ENCODE measurements at regions of chrX and their contacts with region 1.

Region 1: GRCh38 chrX:48957827-48958634 is 624 bp upstream of the OTUD5 start:
- DNase-seq: peak; percentile 81
- ATAC-seq: peak; percentile 84
- H3K4me3 Mint-ChIP-seq: peak overlapping the region; percentile 98
- H3K27ac Mint-ChIP-seq: peak overlapping the region; percentile 100
- H3K4me1 Mint-ChIP-seq: peaks cover 69% of the 10 kb centered on the region
- H3K27me3 Mint-ChIP-seq: no peaks in the 10 kb centered on the region
- CTCF ChIP-seq: no peak

Region 2: GRCh38 chrX:48196745-48197201 is 761.3 kb before region 1 on chrX and contains the start of gene SSX5:
- CTCF ChIA-PET with region 1: no interaction called
- POLR2A ChIA-PET with region 1: no interaction called
- intact Hi-C with region 1: no loop called
- DNase-seq: no peak
- ATAC-seq: no peak
- H3K4me3 Mint-ChIP-seq: no peak within 1 kb of the TSS
- H3K27ac Mint-ChIP-seq: no peak within 1 kb of the TSS
- H3K4me1 Mint-ChIP-seq: no peaks in the 10 kb centered on the region
- H3K27me3 Mint-ChIP-seq: no peaks in the 10 kb centered on the region
- CTCF ChIP-seq: no peak
- total RNA-seq, gene SSX5: not detected in 2 replicates

Region 3: DNA sequence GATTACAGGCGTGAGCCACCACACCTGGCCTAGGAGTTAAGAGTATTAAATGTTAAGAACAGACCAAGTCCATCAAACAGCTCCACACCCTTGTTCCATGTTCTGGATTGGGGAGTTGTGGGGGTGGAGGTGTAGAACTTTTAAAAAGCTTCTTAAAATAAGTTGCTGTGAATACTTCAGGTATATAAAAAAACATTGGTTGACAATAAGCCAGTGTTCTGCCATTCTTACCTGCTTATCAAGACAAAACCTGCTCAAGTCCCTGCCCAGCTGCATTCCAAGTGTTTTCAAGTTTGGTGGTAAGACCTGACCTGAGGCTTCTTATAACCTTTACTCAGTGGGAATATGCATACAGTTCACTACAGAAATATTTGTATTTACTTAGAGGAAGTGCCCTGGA is 377.4 kb before region 1 on chrX:
- CTCF ChIA-PET with region 1: no interaction called
- POLR2A ChIA-PET with region 1: no interaction called
- intact Hi-C with region 1: no loop called
- DNase-seq: no peak
- ATAC-seq: no peak
- H3K4me3 Mint-ChIP-seq: no peak overlapping the region
- H3K27ac Mint-ChIP-seq: no peak overlapping the region
- H3K4me1 Mint-ChIP-seq: peaks cover 9% of the 10 kb centered on the region
- H3K27me3 Mint-ChIP-seq: no peaks in the 10 kb centered on the region
- CTCF ChIP-seq: no peak

Region 4: DNA sequence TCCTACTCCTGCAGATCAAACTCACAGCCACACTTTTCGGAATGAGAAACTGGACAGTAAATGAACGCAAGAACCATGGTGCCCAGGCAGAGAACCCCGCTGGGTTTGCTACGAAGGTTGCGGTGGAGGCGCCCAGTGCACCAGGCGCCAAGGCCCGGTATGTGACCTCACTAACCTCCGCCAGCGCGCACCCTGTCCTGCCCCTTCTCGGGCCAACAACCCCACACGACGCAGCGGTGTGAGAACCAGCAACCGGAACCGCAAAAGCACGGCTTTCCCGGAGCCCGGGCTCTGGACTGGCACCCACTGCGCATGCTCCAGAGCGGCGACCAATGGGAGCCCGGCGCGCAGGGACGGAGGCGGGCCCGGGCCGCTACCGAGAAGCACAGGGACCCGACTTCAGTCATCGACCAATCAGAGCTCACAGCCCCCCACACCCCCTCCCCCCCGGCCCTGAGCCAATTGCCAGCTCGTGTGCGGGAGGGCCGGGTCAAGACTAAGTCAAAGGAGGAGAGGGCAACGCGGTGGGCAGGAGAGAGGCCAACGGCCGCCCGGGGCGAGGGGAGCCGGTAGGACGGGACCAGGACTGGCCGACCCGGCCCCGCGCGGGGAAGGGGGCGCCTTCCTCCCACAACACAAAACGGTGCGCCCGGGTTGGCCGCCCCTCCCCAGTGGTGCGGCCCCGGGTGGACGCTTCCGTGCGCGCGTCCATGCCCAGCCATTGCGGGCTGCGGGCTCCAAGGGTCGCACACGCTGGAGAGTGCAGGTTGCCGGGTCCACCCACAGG is 281.7 kb before region 1 on chrX:
- CTCF ChIA-PET with region 1: no interaction called
- POLR2A ChIA-PET with region 1: interaction called, 5 read pairs
- intact Hi-C with region 1: loop called (anchors 5 kb)
- DNase-seq: peak; percentile 79
- ATAC-seq: peak; percentile 94
- H3K4me3 Mint-ChIP-seq: peak overlapping the region; percentile 89
- H3K27ac Mint-ChIP-seq: peak overlapping the region; percentile 88
- H3K4me1 Mint-ChIP-seq: peaks cover 22% of the 10 kb centered on the region
- H3K27me3 Mint-ChIP-seq: no peaks in the 10 kb centered on the region
- CTCF ChIP-seq: no peak

Region 5: DNA sequence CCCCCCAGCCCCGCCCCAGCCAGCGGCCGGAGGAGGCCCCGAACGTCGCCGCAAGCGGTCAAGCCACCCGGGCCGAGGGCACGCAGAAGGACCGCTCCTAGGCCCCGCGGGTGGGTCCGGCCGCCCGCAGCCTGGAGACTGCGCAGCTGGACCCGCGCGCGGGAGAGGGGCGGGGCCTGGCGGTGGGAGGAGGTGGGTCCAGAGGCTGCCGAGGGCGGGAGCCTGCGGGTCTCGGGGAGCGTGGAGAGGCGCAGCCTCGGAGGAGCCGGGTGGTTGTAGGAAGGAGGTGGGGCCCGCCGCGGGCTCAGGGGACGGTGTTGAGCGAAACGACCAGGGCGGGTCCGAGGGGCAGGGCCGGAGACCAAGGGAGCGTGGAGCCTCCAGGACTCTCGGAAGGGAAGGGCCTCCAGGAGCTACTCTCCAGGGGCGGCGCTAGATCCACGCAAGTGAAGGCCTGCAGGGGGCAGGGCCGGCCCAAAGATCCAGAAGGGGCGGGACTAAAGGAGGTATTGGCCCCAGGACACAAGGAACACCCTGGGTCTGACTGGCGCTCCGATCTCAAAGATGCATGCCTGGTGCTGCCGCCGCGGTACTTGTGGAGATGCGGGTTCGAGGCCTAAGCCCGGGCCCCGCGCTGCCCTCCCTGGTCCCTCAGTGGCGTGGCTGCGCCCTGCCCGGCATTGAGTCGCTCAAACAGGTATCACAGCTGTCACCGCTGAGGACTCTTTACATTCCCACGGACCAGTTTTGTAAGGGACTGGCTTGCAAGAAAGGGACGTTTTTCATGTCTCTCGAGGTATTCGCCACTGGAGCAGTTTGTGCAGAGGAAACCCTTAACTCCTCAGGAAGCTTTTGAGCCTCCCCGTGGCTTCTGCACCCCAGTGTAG is 66.4 kb before region 1 on chrX:
- CTCF ChIA-PET with region 1: no interaction called
- POLR2A ChIA-PET with region 1: interaction called, 13 read pairs
- intact Hi-C with region 1: loop called (anchors 1 kb)
- DNase-seq: peak; percentile 67
- ATAC-seq: peak; percentile 88
- H3K4me3 Mint-ChIP-seq: peak overlapping the region; percentile 82
- H3K27ac Mint-ChIP-seq: peak overlapping the region; percentile 65
- H3K4me1 Mint-ChIP-seq: peaks cover 23% of the 10 kb centered on the region
- H3K27me3 Mint-ChIP-seq: no peaks in the 10 kb centered on the region
- CTCF ChIP-seq: no peak

Region 6: DNA sequence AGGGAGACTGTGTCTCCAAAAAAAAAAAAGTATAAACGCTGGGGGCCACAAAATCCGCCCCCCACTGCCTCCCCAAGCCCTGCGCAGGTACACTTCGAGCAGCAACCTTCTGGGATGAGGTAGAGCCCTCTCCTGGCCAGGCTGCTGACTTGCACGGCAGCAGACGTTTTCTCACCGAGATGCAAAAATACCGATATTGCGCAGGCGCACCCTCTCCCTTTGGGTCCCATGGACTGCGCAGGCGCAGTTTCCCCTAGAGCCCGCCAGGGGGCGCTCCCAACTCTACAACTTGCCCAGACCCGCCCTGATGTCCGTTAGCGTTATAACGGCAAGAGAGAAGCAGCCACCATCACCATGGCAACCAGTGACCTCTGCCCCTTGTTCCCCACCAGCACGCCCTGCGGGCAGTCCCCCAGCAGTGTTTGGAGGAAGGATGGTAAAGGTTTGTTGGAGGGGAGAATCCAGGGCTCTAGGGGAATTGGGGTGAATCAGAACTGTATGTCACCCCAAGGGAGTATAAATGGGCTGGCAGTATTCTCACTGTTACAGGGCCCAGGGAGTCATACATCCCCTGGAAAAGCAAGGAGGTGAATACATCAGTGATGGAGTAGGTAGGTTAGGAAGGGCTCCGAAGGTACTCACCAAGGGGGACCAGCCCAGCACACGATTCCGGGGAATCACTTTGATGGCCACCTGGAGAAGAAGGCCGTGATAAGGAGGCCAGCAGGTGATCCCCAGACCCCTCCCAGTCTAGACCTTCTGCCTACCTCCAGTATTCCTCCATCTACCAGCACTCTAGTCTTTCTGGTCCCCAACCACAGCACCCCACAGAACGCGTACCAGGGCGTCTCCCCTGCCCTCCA is 40.7 kb before region 1 on chrX:
- CTCF ChIA-PET with region 1: no interaction called
- POLR2A ChIA-PET with region 1: interaction called, 31 read pairs
- intact Hi-C with region 1: loop called (anchors 1 kb)
- DNase-seq: peak; percentile 71
- ATAC-seq: peak; percentile 46
- H3K4me3 Mint-ChIP-seq: peak overlapping the region; percentile 97
- H3K27ac Mint-ChIP-seq: peak overlapping the region; percentile 95
- H3K4me1 Mint-ChIP-seq: peaks cover 54% of the 10 kb centered on the region
- H3K27me3 Mint-ChIP-seq: no peaks in the 10 kb centered on the region
- CTCF ChIP-seq: peak; percentile 22

Region 7: GRCh38 chrX:49002091-49002935 is 44.3 kb after region 1 on chrX and contains the start of gene GRIPAP1:
- CTCF ChIA-PET with region 1: no interaction called
- POLR2A ChIA-PET with region 1: interaction called, 18 read pairs
- intact Hi-C with region 1: loop called (anchors 1 kb)
- DNase-seq: peak; percentile 52
- ATAC-seq: peak; percentile 88
- H3K4me3 Mint-ChIP-seq: peak within 1 kb of the TSS; percentile 99
- H3K27ac Mint-ChIP-seq: peak within 1 kb of the TSS; percentile 97
- H3K4me1 Mint-ChIP-seq: peaks cover 24% of the 10 kb centered on the region
- H3K27me3 Mint-ChIP-seq: no peaks in the 10 kb centered on the region
- CTCF ChIP-seq: no peak
- total RNA-seq, gene GRIPAP1: 97.3 and 117 TPM in 2 replicates

Region 8: GRCh38 chrX:49100704-49101628 is 142.9 kb after region 1 on chrX:
- CTCF ChIA-PET with region 1: no interaction called
- POLR2A ChIA-PET with region 1: no interaction called
- intact Hi-C with region 1: loop called (anchors 1 kb)
- DNase-seq: peak; percentile 78
- ATAC-seq: peak; percentile 92
- H3K4me3 Mint-ChIP-seq: peak overlapping the region; percentile 90
- H3K27ac Mint-ChIP-seq: peak overlapping the region; percentile 95
- H3K4me1 Mint-ChIP-seq: peaks cover 9% of the 10 kb centered on the region
- H3K27me3 Mint-ChIP-seq: no peaks in the 10 kb centered on the region
- CTCF ChIP-seq: no peak